Common myeloid progenitor, CD34-positive (primary cell): ENCODE measurements at regions of chr18 and their contacts with region 1.

Region 1: GRCh38 chr18:49041435-49042245 is 90.9 kb upstream of the SMAD7 start:
- DNase-seq: peak; percentile 61 to 81 (median 79)
- H3K4me3 ChIP-seq: no peak overlapping the region
- H3K27ac ChIP-seq: no peak overlapping the region
- H3K4me1 ChIP-seq: peaks cover 3 to 42% (median 32%) of the 10 kb centered on the region in 4 experiments
- H3K27me3 ChIP-seq: no peaks in the 10 kb centered on the region

Region 2: GRCh38 chr18:48983771-48984355 is 57.8 kb before region 1 on chr18:
- CTCF ChIA-PET with region 1: interaction called, 20 read pairs
- POLR2A ChIA-PET with region 1: no interaction called
- DNase-seq: peak; percentile 22 to 66 (median 60)
- H3K4me3 ChIP-seq: no peak overlapping the region
- H3K27ac ChIP-seq: no peak overlapping the region
- H3K4me1 ChIP-seq: peaks cover 0 to 59% (median 22%) of the 10 kb centered on the region in 4 experiments
- H3K27me3 ChIP-seq: no peaks in the 10 kb centered on the region

Region 3: GRCh38 chr18:49052891-49053644 is 11.4 kb after region 1 on chr18:
- CTCF ChIA-PET with region 1: interaction called, 85 read pairs
- POLR2A ChIA-PET with region 1: interaction called, 4 read pairs
- DNase-seq: peak; percentile 93 to 99 (median 98)
- H3K4me3 ChIP-seq: peak overlapping the region in 3 of 7 experiments; percentile 38 to 46 (median 42)
- H3K27ac ChIP-seq: peak overlapping the region; percentile 51 to 72
- H3K4me1 ChIP-seq: peaks cover 14 to 99% (median 77%) of the 10 kb centered on the region in 4 experiments
- H3K27me3 ChIP-seq: no peaks in the 10 kb centered on the region

Region 4: GRCh38 chr18:49089049-49089448 is 47.4 kb after region 1 on chr18:
- CTCF ChIA-PET with region 1: no interaction called
- POLR2A ChIA-PET with region 1: no interaction called
- DNase-seq: no peak
- H3K4me3 ChIP-seq: no peak overlapping the region
- H3K27ac ChIP-seq: no peak overlapping the region
- H3K4me1 ChIP-seq: no peaks in the 10 kb centered on the region
- H3K27me3 ChIP-seq: no peaks in the 10 kb centered on the region